Prostate gland (tissue), 2 donors: ENCODE measurements at regions of chr7 and their contacts with region 1.

Region 1: DNA sequence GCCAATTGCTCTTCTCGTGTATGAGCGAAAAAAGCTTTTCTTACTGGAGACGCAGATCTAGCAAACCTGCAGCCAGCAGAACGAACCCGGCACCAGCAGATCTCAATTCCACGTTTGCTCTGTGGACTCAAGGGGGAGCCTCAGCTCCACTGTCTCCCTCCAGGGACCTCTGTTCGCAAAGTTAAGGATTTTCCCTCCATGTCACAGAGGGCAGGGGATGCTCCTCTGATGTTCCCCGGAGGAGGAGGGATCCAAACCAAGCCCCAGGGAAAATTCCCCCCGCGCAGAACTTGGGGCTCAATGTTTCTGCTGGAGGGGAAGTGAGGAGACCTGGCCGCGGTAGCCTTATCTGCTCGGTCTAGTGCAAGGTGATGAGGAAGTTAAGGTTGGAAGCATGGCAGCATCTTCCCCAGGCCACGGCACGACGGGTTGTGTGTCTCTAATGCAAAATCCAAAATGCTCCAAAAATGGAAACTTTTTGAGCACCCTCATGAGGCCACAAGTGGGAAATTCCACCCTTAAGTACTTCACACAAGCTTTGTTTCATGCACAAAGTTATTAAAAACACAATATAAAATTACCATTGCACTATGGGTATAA is 9.0 kb downstream of the IQCE start:
- DNase-seq: no peak
- H3K4me3 ChIP-seq: no peak overlapping the region
- H3K27ac ChIP-seq: no peak overlapping the region
- H3K4me1 ChIP-seq: no peaks in the 10 kb centered on the region
- H3K27me3 ChIP-seq: no peaks in the 10 kb centered on the region
- CTCF ChIP-seq: peak in 3 of 4 experiments; percentile 23 to 45 (median 31)
- POLR2A ChIP-seq: no peak

Region 2: DNA sequence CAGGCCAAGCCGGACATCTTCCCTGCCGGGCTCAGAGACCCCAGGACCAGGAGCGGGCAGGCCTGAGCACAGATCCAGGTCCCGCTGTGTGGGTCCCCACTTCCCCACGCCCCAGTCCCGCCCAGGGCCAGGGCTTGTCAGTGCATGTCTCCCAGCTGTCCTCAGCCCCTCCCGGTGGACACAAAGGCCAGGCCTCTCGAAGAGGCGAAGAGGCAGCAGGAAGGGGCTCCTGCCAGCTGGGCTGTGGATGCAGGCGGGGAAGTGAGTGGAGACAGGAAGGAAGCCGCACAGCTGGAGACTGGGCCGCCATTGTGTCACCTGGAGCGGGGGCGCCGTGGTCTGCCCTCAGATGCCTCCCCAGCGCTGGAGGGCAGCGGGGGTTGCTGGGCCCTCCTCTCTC is 96.4 kb before region 1 on chr7:
- intact Hi-C with region 1: no loop called
- DNase-seq: no peak
- H3K4me3 ChIP-seq: no peak overlapping the region
- H3K27ac ChIP-seq: no peak overlapping the region
- H3K4me1 ChIP-seq: no peaks in the 10 kb centered on the region
- H3K27me3 ChIP-seq: no peaks in the 10 kb centered on the region
- CTCF ChIP-seq: no peak
- POLR2A ChIP-seq: no peak

Region 3: GRCh38 chr7:2851497-2851896 is 283.7 kb after region 1 on chr7:
- intact Hi-C with region 1: loop called (anchors 10 kb)
- DNase-seq: no peak
- H3K4me3 ChIP-seq: no peak overlapping the region
- H3K27ac ChIP-seq: no peak overlapping the region
- H3K4me1 ChIP-seq: no peaks in the 10 kb centered on the region
- H3K27me3 ChIP-seq: no peaks in the 10 kb centered on the region
- CTCF ChIP-seq: no peak
- POLR2A ChIP-seq: no peak